ENCODE measurements at regions of chr18 and their contacts with region 1.

Region 1: GRCh38 chr18:24271381-24272331 is 126.0 kb downstream of the OSBPL1A start:
- DNase-seq: peak; percentile 61 to 67
- H3K4me3 ChIP-seq: peak overlapping the region; percentile 91
- H3K27ac ChIP-seq: peak overlapping the region; percentile 83
- H3K4me1 ChIP-seq: peaks cover 46% of the 10 kb centered on the region
- H3K27me3 ChIP-seq: no peaks in the 10 kb centered on the region
- CTCF ChIP-seq: no peak

Region 2: DNA sequence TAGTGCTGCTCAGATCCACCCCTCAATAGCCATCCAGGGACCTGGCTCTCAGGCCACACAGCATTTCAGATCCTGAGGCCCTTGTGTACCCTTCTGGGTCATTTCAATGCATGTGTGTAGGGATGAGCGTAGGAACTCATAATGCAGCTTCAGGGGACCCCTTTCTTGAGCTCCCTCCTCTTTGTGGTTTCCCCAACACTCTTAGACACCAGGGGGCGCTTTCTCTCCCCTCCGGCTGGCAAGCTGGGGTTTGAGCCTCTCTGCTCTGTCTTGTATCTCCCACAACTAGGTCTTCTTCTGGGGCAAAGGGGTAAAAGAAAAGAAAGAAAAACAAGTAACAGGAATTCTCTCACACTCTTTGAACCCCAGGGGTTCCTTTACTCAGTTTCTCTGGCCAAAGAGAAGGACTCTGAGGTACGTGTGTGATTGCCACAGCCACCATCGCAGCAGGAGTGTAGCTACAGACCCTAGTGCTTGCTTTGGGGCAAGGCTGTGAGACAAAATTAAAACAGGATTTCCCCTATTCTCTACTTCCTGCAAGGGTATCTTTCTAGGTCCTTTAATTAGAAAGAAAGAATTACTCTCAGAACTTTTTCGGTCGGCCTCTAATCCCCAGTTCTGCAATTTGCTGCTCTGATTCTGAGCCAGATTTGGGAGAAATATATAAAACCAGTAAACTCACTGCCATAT is 94.8 kb before region 1 on chr18:
- CTCF ChIA-PET with region 1: no interaction called
- POLR2A ChIA-PET with region 1: no interaction called
- intact Hi-C with region 1: loop called (anchors 2 kb)
- DNase-seq: peak in 1 of 2 experiments; percentile 21
- H3K4me3 ChIP-seq: no peak overlapping the region
- H3K27ac ChIP-seq: no peak overlapping the region
- H3K4me1 ChIP-seq: peaks cover 14% of the 10 kb centered on the region
- H3K27me3 ChIP-seq: no peaks in the 10 kb centered on the region
- CTCF ChIP-seq: peak; percentile 62

Region 3: GRCh38 chr18:24227977-24228666 is 43.5 kb before region 1 on chr18:
- CTCF ChIA-PET with region 1: no interaction called
- POLR2A ChIA-PET with region 1: no interaction called
- intact Hi-C with region 1: loop called (anchors 1 kb)
- DNase-seq: peak; percentile 57 to 83
- H3K4me3 ChIP-seq: no peak overlapping the region
- H3K27ac ChIP-seq: peak overlapping the region; percentile 77
- H3K4me1 ChIP-seq: peaks cover 17% of the 10 kb centered on the region
- H3K27me3 ChIP-seq: no peaks in the 10 kb centered on the region
- CTCF ChIP-seq: no peak